GM10248 (cell line): ENCODE measurements at regions of chr5 and their contacts with region 1.

Region 1: DNA sequence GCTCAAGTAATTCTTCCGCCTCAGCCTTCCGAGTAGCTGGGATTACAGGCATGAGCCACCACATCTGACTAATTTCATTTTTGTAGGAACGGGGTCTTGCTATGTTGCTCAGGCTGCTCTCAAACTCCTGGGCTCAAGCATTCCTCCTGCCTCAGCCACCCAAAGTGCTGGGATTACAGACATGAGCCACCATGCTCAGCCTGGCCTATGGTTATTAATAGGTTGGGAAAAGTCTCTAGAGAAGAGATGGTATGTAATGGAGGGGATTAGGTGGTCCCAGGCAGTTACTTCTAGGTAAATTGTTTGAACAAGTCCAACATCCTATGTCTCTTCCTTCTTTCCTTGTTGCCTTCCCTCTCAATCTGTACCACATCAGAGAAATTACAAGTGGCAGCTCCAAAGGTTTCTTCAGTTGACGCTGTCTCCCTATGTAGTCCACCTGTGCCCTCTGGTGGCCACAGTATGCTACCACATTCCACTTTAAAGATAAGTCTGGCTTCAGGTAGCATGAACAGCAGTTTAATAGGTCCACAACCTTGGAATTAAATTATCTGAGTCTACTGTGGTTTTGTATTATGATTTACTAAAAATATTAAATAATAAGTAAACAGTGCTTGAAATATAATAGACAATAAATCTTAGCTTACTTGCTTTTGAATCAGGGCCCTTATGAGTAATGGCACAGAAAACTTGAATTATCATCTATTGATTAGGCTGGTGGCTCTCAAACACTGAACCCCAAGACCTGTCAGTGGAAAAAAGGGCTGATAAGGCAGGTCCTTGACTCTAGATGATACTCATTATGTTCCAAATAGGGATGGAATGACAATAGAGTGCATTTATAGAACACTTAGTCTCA is 9.7 kb downstream of the TIGD6 start:
- DNase-seq: peak; percentile 70
- CTCF ChIP-seq: peak; percentile 90

Region 2: GRCh38 chr5:149636851-149637246 is 353.9 kb before region 1 on chr5:
- CTCF ChIA-PET with region 1: interaction called, 118 read pairs
- POLR2A ChIA-PET with region 1: no interaction called
- DNase-seq: peak; percentile 73
- CTCF ChIP-seq: peak; percentile 89

Region 3: GRCh38 chr5:149817539-149818060 is 173.1 kb before region 1 on chr5:
- CTCF ChIA-PET with region 1: interaction called, 10 read pairs
- POLR2A ChIA-PET with region 1: no interaction called
- DNase-seq: no peak
- CTCF ChIP-seq: no peak

Region 4: GRCh38 chr5:149834246-149834855 is 156.4 kb before region 1 on chr5:
- CTCF ChIA-PET with region 1: interaction called, 68 read pairs
- POLR2A ChIA-PET with region 1: no interaction called
- DNase-seq: peak; percentile 77
- CTCF ChIP-seq: peak; percentile 43

Region 5: GRCh38 chr5:149960272-149961185 is 30.2 kb before region 1 on chr5 and contains the start of gene SLC26A2:
- CTCF ChIA-PET with region 1: interaction called, 46 read pairs
- POLR2A ChIA-PET with region 1: no interaction called
- DNase-seq: peak; percentile 98
- CTCF ChIP-seq: no peak

Region 6: DNA sequence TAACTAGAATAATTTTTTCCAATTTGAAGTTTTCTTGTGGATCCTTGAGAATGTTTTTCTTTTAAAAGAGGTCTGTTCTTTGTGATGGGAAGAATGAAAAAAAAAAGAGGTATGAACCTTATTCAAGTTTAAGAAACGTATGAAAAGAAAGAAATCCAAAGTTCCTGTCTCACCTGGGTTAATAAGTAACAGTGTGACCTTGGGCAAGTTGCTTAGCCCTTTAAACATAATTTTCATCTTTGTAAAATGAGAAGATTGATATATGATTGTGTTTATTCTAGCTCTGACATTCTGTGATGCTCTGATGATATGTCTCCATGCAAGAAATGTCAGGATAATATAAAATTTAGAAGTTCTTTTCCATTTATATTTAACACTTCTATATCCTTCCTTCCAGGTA is 10.9 kb before region 1 on chr5:
- CTCF ChIA-PET with region 1: interaction called, 14 read pairs
- POLR2A ChIA-PET with region 1: no interaction called
- DNase-seq: no peak
- CTCF ChIP-seq: no peak

Region 7: DNA sequence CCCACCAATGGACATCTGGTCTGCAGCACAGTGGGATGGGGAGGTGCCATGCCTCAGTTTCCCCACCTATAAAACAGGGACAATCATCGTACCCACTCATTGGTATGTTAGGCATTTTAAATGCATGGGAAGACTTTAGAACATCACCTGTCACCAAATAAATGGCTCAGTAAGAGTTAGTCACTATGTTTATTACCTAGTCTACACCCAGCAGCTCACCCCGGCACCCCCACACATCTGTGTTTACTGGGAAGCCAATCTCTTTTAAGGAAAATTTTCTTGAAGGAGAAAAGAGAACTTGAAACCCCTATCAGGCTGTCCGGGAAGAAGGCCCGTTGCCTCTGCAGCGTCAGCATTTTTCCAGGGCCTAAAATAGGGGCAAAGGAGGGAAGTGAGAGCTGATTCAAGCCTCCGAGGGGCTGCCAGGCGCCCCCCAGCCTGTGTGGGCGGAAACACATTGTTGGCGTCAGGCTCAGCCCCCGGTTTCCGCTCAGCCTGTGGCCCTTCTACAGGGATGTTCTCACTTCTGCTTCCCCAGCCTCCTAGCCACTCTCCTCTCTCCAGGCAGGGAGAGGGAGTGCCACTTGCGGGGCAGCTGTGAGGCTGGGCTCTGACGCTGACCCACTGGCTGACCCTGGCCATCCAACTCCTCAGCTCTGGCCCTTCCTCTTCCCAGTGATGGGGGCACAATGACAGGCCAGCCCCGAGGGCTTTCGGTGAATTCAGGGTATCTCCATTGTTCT is 91.0 kb after region 1 on chr5:
- CTCF ChIA-PET with region 1: no interaction called
- POLR2A ChIA-PET with region 1: no interaction called
- DNase-seq: peak; percentile 84
- CTCF ChIP-seq: no peak

Region 8: DNA sequence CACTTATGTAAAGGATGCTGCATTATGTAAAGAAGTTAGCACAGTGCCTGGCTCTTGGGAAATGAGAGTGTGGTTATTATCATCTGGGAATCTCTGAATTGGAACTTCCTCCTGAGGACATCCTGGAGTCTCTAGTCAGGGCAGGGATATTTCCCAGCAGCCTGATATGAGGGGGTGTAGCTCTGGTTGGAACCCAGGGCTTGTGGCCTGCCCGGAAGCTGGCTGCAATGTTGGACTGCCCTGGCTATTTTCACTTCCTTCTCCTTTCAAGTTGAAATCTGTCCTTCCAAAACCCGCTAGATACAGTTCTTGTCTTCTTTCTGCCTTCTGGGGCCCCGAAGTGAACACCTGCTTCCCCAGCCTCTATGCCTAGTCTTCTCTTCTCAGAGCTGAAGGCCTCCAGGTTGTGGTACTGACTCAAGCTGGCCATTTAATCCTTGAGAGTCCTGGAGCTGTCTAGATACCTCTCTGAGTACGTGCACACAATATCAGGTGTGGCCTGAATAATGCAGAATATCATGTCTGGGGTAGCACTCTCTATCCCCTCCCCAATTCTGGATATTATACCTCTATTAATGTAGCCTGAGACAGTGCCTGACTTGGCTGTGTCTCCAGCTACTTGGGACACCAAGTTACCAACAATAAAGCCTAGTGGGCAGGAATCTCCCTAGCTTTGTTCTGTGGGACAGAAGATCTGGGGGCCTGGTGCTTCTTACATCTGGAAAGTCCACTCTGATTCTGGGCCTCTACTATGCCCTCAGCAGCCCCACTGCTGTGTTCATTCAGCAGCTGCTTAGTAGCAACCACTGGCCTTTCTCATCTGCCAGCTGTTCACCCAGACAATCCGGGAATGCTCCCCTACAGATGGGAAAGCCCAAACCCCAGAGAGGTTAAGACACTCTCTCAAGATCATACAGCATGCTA is 244.1 kb after region 1 on chr5:
- CTCF ChIA-PET with region 1: no interaction called
- POLR2A ChIA-PET with region 1: no interaction called
- DNase-seq: no peak
- CTCF ChIP-seq: no peak

Region 9: DNA sequence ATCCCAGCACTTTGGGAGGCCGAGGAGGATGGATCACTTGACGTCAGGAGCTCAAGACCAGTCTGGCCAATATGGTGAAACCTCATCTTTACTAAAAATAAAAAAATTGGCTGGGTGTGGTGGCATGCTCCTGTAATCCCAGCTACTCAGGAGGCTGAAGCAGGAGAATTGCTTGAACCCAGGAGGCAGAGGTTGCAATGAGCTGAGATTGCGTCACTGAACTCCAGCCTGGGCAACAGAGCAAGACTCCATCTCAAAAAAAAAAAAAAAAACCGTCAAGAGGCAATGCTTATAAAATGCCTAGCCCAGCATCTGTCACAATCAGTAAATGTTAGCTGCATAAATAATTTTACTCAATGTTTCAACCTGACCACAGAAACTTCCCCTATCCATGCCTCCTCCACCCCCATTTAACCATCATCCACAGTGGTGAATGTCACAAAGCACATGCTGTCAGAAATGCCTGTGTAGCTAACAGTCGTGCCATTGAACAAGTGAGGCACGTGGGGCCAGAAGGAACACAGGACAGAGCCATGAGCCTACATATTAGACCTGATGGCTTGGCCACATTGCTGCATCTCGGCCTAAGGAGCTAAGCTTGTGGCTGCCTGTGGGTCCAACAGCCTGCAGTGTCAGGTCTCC is 350.0 kb after region 1 on chr5:
- CTCF ChIA-PET with region 1: no interaction called
- POLR2A ChIA-PET with region 1: no interaction called
- DNase-seq: no peak
- CTCF ChIP-seq: no peak